ENCODE measurements at regions of chr5 and their contacts with region 1.

Region 1: GRCh38 chr5:40879163-40879942 is 29.9 kb upstream of the C7 start:
- DNase-seq: no peak
- H3K4me3 ChIP-seq: no peak overlapping the region
- H3K27ac ChIP-seq: no peak overlapping the region
- H3K4me1 ChIP-seq: peaks cover 0 to 6% (median 2%) of the 10 kb centered on the region in 4 donors
- H3K27me3 ChIP-seq: no peaks in the 10 kb centered on the region
- CTCF ChIP-seq: peak; percentile 55 to 70 (median 63)
- EP300 ChIP-seq: no peak
- POLR2A ChIP-seq: no peak

Region 2: DNA sequence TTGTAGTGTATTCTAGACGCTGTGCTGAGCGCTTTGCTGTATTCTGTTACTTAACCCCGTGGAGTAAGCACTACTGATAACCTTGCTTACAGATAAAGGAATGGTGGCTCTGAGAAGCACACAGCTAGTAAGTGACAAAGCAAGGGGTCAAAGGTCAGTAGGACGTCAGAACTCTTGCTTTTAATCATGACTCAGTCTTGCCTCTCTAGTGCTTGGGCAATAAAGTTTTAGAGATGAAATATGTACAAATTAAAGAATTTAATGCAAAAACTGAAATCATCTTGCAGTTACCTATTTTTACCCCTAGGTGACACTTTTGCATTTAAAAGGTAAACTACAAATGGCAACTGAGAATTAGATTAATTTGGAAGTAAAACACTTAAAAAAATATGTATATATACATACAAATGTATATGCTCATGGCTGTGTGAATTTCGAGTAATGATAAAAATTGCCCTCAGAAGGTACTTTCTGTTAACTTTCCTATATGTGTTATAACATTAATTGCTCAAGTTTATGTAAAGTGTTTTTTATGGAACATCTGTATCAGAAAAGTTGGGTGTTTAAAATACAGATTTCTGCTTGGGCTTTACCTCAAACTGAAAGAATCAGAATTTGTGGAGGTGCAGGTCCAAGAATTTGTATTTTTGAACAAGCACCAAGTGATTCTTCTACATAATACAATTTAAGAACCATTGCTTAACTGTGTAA is 1279.5 kb before region 1 on chr5:
- in situ Hi-C with region 1: loop called (anchors 25 kb)
- intact Hi-C with region 1: no loop called
- DNase-seq: no peak
- H3K4me3 ChIP-seq: no peak overlapping the region
- H3K27ac ChIP-seq: no peak overlapping the region
- H3K4me1 ChIP-seq: peaks cover 0 to 11% (median 5%) of the 10 kb centered on the region in 4 donors
- H3K27me3 ChIP-seq: peaks cover 4% of the 10 kb centered on the region
- CTCF ChIP-seq: peak; percentile 52 to 70 (median 58)
- EP300 ChIP-seq: no peak
- POLR2A ChIP-seq: no peak

Region 3: DNA sequence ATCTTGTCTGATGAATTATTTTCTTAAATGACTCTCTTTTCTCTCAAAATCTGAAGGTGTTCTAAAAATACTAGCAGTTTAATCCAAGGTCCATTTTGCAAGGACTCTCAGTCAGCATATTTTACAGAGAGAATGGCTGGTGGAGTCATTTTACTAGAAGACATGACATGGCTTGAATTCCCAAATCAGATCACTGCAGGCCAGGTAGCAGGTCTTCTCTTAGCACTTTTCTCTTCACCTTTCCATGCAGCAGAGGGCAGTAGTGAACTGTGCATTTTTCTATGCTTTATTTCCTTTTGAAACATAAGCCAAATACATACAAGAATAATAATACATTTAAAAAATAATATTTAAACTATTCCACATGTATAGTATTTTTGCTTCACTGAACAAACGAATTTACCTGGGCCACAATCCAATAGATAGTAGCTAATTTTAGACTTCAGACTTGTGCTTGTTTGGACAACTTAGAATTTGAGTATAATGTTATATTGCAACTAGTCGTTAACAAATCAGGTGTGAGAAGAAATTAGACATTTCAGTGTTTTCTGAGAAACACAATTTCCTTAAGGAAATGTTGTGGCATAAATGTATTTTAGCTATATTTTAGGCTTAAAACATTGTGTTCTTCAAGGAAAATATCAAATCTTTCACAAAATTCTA is 1165.2 kb before region 1 on chr5:
- in situ Hi-C with region 1: loop called in 1 of 4 experiments (anchors 25 kb)
- intact Hi-C with region 1: no loop called
- DNase-seq: peak; percentile 49
- H3K4me3 ChIP-seq: no peak overlapping the region
- H3K27ac ChIP-seq: peak overlapping the region in 3 of 4 donors; percentile 25 to 35 (median 33)
- H3K4me1 ChIP-seq: peaks cover 0 to 12% (median 0%) of the 10 kb centered on the region in 4 donors
- H3K27me3 ChIP-seq: no peaks in the 10 kb centered on the region
- CTCF ChIP-seq: peak; percentile 59 to 71 (median 70)
- EP300 ChIP-seq: no peak
- POLR2A ChIP-seq: no peak

Region 4: DNA sequence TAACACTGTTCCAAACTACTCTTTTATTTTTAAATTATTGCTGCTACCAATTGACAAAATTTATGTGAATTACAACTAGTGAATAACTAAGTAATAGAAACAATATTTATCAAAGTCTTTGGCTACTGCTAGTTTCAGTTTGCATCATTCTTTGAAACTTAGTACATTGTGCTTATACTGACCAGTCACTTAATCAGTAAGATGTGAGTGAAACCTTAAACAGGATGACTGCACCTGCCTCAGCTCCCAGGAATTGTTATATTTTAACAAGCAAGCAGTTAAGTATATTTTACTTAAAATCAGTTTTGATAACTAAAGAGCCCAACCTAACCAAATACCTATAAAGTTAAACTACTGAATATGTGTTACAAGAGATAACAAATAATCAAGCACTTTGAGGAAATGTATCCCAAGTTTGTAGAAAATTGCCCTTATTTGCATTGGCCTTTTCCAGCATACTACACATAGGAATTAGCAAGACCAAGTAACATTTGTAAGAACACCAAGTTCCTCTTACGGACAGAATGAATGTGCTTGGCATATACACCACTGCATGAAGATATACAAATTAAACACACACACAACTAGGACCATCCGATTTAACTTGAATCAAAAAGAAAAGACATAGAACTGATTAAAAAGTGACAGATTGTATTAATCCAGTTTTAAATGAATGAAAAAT is 909.1 kb before region 1 on chr5:
- in situ Hi-C with region 1: loop called in 1 of 4 experiments (anchors 25 kb)
- intact Hi-C with region 1: no loop called
- DNase-seq: no peak
- H3K4me3 ChIP-seq: no peak overlapping the region
- H3K27ac ChIP-seq: no peak overlapping the region
- H3K4me1 ChIP-seq: no peaks in the 10 kb centered on the region
- H3K27me3 ChIP-seq: no peaks in the 10 kb centered on the region
- CTCF ChIP-seq: no peak
- EP300 ChIP-seq: no peak
- POLR2A ChIP-seq: no peak

Region 5: GRCh38 chr5:40755407-40756365 is 123.7 kb before region 1 on chr5 and contains the start of gene TTC33:
- in situ Hi-C with region 1: loop called in 1 of 4 experiments (anchors 10 kb)
- intact Hi-C with region 1: loop called (anchors 5 kb)
- DNase-seq: peak; percentile 96
- H3K4me3 ChIP-seq: peak within 1 kb of the TSS; percentile 66 to 97 (median 80)
- H3K27ac ChIP-seq: peak within 1 kb of the TSS; percentile 93 to 99 (median 96)
- H3K4me1 ChIP-seq: peaks cover 2 to 15% (median 6%) of the 10 kb centered on the region in 4 donors
- H3K27me3 ChIP-seq: no peaks in the 10 kb centered on the region
- CTCF ChIP-seq: peak; percentile 61 to 80 (median 71)
- EP300 ChIP-seq: no peak
- POLR2A ChIP-seq: peak; percentile 63
- total RNA-seq, gene TTC33: 6.4 to 67.3 (median 17.4) TPM

Region 6: GRCh38 chr5:40853632-40854192 is 25.6 kb before region 1 on chr5:
- in situ Hi-C with region 1: no loop called
- intact Hi-C with region 1: no loop called
- DNase-seq: no peak
- H3K4me3 ChIP-seq: no peak overlapping the region
- H3K27ac ChIP-seq: no peak overlapping the region
- H3K4me1 ChIP-seq: no peaks in the 10 kb centered on the region
- H3K27me3 ChIP-seq: no peaks in the 10 kb centered on the region
- CTCF ChIP-seq: no peak
- EP300 ChIP-seq: no peak
- POLR2A ChIP-seq: no peak